CD8-positive, alpha-beta memory T cell (primary cell): ENCODE measurements at regions of chr19 and their contacts with region 1.

Region 1: GRCh38 chr19:4638828-4639530 is at the start of gene TNFAIP8L1:
- DNase-seq: peak; percentile 98 to 99 (median 99)
- H3K4me3 ChIP-seq: peak within 1 kb of the TSS; percentile 93
- H3K4me3 Mint-ChIP-seq: peak within 1 kb of the TSS; percentile 85 to 95 (median 94)
- H3K27ac ChIP-seq: peak within 1 kb of the TSS; percentile 82
- H3K27ac Mint-ChIP-seq: peak within 1 kb of the TSS; percentile 93 to 100 (median 99)
- H3K4me1 ChIP-seq: peaks cover 54% of the 10 kb centered on the region
- H3K4me1 Mint-ChIP-seq: peaks cover 16 to 36% (median 25%) of the 10 kb centered on the region in 3 donors
- H3K27me3 ChIP-seq: no peaks in the 10 kb centered on the region
- H3K27me3 Mint-ChIP-seq: no peaks in the 10 kb centered on the region
- total RNA-seq, gene TNFAIP8L1: 9.0 to 10.0 TPM

Region 2: GRCh38 chr19:4567584-4568071 is 71.4 kb before region 1 on chr19:
- CTCF ChIA-PET with region 1: interaction called, 38 read pairs
- POLR2A ChIA-PET with region 1: no interaction called
- DNase-seq: peak; percentile 26 to 70 (median 47)
- H3K4me3 ChIP-seq: no peak overlapping the region
- H3K4me3 Mint-ChIP-seq: no peak overlapping the region
- H3K27ac ChIP-seq: no peak overlapping the region
- H3K27ac Mint-ChIP-seq: peak overlapping the region in 1 of 8 donors; percentile 14
- H3K4me1 ChIP-seq: no peaks in the 10 kb centered on the region
- H3K4me1 Mint-ChIP-seq: no peaks in the 10 kb centered on the region
- H3K27me3 ChIP-seq: no peaks in the 10 kb centered on the region
- H3K27me3 Mint-ChIP-seq: peaks cover 6 to 11% of the 10 kb centered on the region in 2 donors

Region 3: DNA sequence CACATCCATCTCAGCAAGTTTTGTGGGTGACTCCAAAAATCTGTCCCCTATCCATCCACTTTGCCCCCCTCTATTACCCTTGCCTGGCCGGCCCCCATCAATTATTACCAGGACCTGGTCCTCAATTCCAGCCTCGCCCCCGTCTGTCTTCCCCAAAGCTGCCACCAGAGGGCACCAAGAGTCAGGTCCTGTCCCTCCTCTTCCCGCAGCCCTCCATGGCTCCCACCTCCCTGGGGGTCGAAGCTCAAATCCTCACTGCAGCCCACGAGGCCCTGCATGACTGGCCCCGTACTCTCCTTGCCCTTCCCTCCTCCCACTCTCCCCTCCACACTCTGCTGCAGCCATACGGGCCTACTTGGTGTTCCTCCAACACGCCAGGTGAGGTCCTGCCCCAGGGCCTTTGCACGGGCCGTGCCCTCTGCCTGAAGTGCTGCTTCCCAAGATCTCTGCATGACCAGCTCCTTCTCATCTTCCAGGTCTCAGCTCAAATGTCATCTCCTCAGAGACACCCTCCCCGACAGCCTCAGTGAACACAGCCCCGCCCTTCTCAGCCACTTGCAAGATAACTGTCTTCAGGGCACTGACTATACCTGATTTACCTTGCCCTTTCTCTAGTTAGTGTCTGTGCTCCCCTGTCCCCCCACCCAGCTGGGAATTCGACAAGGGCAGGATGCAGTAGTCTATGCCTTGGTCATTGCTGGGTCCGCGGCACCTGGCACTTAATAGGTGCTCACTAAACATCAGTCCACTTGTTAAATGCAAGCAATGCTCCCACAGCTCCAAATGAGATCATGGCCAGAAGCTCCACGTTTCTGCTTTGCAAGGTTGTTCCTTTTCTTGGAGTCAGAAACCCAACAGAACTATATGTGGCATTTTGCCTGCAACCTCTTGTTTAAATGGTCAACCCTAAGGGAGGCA is 62.7 kb before region 1 on chr19:
- CTCF ChIA-PET with region 1: interaction called, 44 read pairs
- POLR2A ChIA-PET with region 1: interaction called, 3 read pairs
- DNase-seq: peak; percentile 40 to 79 (median 55)
- H3K4me3 ChIP-seq: no peak overlapping the region
- H3K4me3 Mint-ChIP-seq: no peak overlapping the region
- H3K27ac ChIP-seq: no peak overlapping the region
- H3K27ac Mint-ChIP-seq: no peak overlapping the region
- H3K4me1 ChIP-seq: no peaks in the 10 kb centered on the region
- H3K4me1 Mint-ChIP-seq: no peaks in the 10 kb centered on the region
- H3K27me3 ChIP-seq: peaks cover 15% of the 10 kb centered on the region
- H3K27me3 Mint-ChIP-seq: peaks cover 28 to 45% of the 10 kb centered on the region in 2 donors

Region 4: DNA sequence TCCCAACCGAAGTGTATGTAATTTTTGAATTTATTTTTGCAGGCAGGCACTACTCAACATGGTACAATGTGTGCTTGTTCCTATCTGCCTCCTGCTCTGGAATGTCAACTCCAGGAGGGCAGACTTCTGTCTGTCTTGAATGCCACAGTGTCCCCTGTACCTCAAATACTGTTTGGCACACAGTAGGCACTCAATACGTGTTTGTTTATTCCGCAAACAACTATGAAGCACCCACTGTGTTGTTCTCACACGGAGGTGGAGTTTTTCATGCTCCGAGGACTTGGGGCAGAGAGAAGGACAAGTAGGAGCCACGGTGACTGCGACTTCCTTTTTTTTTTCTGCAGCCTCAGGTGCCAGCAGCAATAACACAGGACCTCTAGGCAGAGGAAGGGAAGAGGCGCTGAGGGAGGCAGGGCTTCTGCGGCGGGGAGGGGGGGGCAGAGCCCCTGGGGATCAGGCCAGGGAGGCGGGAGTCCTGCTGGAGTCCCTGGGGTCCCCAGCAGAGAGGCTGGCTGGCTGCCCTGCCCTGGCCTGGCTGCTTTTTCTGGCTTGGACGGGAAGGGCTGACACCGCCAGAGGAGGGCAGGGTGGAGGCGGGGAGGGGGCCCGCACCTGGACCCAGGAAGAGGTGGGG is 29.0 kb before region 1 on chr19:
- CTCF ChIA-PET with region 1: interaction called, 10 read pairs
- POLR2A ChIA-PET with region 1: no interaction called
- DNase-seq: no peak
- H3K4me3 ChIP-seq: no peak overlapping the region
- H3K4me3 Mint-ChIP-seq: no peak overlapping the region
- H3K27ac ChIP-seq: no peak overlapping the region
- H3K27ac Mint-ChIP-seq: no peak overlapping the region
- H3K4me1 ChIP-seq: no peaks in the 10 kb centered on the region
- H3K4me1 Mint-ChIP-seq: no peaks in the 10 kb centered on the region
- H3K27me3 ChIP-seq: no peaks in the 10 kb centered on the region
- H3K27me3 Mint-ChIP-seq: peaks cover 22 to 32% of the 10 kb centered on the region in 2 donors

Region 5: DNA sequence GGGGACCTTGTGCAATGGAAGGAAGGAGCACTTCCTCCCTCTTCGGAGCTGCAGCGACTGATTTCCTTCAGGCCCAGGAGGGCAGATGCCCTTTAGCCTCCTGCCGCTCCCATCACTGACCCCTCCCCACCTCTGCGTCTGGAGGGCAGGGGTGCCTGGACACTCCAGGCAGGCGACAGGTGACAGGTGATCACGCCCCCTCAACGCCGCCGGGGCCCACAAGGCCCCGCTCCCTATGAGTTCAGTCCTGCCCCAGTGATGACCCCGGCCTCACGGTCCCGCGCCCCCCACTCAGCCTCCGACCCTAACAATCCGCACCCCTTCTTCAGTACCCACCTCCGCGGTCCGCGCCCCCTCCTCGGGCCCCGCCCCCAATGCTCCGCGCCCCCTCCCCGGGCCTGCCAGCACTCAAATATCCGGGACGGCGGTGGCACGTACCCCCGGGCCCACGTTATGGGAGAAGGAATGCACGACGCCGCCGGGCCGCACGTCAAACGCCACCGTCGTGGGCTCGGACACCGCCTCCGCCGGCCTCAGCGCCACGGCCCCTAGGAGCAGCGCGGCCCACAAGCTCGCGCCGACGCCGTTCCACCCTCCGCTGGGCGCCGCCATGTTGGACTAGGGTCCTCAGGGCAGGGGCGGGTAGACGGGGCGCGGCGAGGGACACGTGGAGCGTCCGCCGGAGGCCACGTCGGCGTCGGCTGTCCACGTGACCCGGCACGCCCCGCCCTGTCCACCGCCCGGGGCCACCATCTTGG is 30.9 kb after region 1 on chr19 and contains the start of gene MYDGF:
- CTCF ChIA-PET with region 1: interaction called, 10 read pairs
- POLR2A ChIA-PET with region 1: no interaction called
- DNase-seq: peak; percentile 89 to 94 (median 91)
- H3K4me3 ChIP-seq: peak within 1 kb of the TSS; percentile 59
- H3K4me3 Mint-ChIP-seq: peak within 1 kb of the TSS; percentile 83 to 95 (median 88)
- H3K27ac ChIP-seq: peak within 1 kb of the TSS; percentile 66
- H3K27ac Mint-ChIP-seq: peak within 1 kb of the TSS; percentile 73 to 98 (median 90)
- H3K4me1 ChIP-seq: peaks cover 18% of the 10 kb centered on the region
- H3K4me1 Mint-ChIP-seq: peaks cover 11 to 23% (median 19%) of the 10 kb centered on the region in 3 donors
- H3K27me3 ChIP-seq: no peaks in the 10 kb centered on the region
- H3K27me3 Mint-ChIP-seq: peaks cover 0 to 3% of the 10 kb centered on the region in 2 donors
- total RNA-seq, gene MYDGF: 83.2 to 88.6 TPM